AG04450 (cell line): ENCODE measurements at regions of chr6 and their contacts with region 1.

Region 1: GRCh38 chr6:144957236-144957937 is 672.3 kb downstream of the UTRN start:
- DNase-seq: no peak
- H3K4me3 ChIP-seq: no peak overlapping the region
- H3K27ac ChIP-seq: no peak overlapping the region
- H3K27me3 ChIP-seq: no peaks in the 10 kb centered on the region
- CTCF ChIP-seq: no peak

Region 2: DNA sequence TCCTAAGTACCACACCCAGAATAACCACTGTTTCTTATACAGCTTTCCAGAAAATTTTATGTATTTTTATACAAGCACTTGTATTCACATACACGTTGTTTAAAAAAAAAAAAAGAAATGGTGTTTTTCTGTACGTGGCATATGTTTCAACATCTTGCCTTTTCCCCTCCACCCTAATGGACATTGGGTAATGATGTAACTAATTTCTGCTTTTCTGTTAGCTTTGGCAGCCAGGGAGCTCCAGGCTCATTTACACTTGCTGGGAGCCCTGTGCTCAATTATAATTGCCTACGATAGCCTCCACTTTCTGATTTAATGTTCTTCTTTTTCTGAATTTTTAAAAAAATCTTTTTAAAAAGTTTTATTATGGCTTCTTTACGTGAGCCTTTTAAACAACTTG is 319.8 kb before region 1 on chr6:
- CTCF ChIA-PET with region 1: no interaction called
- POLR2A ChIA-PET with region 1: no interaction called
- DNase-seq: no peak
- H3K4me3 ChIP-seq: no peak overlapping the region
- H3K27ac ChIP-seq: no peak overlapping the region
- H3K27me3 ChIP-seq: no peaks in the 10 kb centered on the region
- CTCF ChIP-seq: no peak

Region 3: GRCh38 chr6:144969154-144969553 is 11.8 kb after region 1 on chr6:
- CTCF ChIA-PET with region 1: no interaction called
- POLR2A ChIA-PET with region 1: interaction called, 10 read pairs
- DNase-seq: no peak
- H3K4me3 ChIP-seq: no peak overlapping the region
- H3K27ac ChIP-seq: no peak overlapping the region
- H3K27me3 ChIP-seq: no peaks in the 10 kb centered on the region
- CTCF ChIP-seq: no peak

Region 4: DNA sequence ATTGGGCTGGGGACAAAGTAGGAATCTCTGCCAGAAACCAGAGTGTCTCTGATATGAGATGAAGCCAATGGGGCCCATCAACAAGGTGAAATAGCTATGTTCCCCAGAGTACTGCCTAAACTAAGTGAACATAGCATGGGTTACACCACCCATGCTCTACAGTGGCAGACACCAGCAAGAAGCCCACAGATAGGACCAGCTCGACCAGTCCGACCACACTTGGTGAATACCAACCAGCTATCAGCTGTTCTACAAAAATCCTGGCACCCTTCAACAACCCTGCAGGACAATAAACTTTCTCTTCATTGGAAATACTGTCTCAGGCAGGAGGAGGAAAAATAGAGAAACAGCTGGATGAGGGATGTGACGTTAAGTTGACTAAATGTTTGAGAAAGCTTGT is 466.5 kb after region 1 on chr6:
- CTCF ChIA-PET with region 1: no interaction called
- POLR2A ChIA-PET with region 1: no interaction called
- DNase-seq: no peak
- H3K4me3 ChIP-seq: no peak overlapping the region
- H3K27ac ChIP-seq: no peak overlapping the region
- H3K27me3 ChIP-seq: no peaks in the 10 kb centered on the region
- CTCF ChIP-seq: no peak